Mammary epithelial cell (primary cell): ENCODE measurements at regions of chr6 and their contacts with region 1.

Region 1: DNA sequence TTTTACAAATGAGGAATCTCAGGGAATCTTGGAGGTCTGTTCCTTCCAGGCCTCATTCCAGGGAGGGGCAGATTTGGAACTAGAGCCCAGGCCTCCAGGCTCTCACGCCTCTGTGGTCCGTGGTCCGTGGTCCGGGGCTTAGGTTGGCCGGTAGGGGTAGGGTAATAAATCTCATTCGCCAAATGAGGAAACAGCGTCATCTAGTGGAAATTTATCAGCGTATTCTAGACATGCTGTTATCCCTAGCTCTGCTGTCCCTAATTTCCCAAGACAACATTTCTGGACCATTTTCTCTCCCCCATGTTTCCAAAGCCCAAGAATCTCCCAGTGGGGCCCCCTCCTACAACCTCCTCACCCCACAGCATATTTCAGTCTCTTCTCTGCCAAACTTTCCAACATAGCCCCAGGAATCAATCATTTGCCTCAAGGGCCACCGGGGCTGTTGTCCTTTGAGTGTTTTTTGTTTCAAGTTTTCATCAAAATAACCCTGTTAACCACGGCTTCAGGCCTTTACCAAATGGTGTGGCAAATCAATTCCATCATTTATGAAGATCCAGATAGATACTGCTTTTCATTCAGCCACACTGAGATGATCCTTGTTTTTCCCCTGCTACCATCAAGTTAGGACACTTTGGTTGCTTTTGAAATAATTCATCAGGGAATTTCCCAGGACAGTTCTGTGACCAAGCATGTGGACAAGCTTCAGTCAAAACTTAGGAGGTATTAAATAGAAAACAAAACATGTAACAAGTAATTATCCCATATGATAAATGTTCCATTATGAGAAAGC is 126.8 kb downstream of the ALDH8A1 start:
- DNase-seq: peak; percentile 72
- H3K4me3 ChIP-seq: no peak overlapping the region
- H3K27ac ChIP-seq: no peak overlapping the region
- H3K4me1 ChIP-seq: peaks cover 7% of the 10 kb centered on the region
- H3K27me3 ChIP-seq: no peaks in the 10 kb centered on the region
- CTCF ChIP-seq: peak; percentile 94 to 95

Region 2: GRCh38 chr6:134123666-134124208 is 699.4 kb before region 1 on chr6:
- CTCF ChIA-PET with region 1: interaction called, 7 read pairs
- dilution Hi-C with region 1: loop called (anchors 5 kb)
- in situ Hi-C with region 1: no loop called
- intact Hi-C with region 1: loop called (anchors 1 kb)
- DNase-seq: peak; percentile 80
- H3K4me3 ChIP-seq: no peak overlapping the region
- H3K27ac ChIP-seq: no peak overlapping the region
- H3K4me1 ChIP-seq: peaks cover 11% of the 10 kb centered on the region
- H3K27me3 ChIP-seq: no peaks in the 10 kb centered on the region
- CTCF ChIP-seq: peak; percentile 60 to 82

Region 3: DNA sequence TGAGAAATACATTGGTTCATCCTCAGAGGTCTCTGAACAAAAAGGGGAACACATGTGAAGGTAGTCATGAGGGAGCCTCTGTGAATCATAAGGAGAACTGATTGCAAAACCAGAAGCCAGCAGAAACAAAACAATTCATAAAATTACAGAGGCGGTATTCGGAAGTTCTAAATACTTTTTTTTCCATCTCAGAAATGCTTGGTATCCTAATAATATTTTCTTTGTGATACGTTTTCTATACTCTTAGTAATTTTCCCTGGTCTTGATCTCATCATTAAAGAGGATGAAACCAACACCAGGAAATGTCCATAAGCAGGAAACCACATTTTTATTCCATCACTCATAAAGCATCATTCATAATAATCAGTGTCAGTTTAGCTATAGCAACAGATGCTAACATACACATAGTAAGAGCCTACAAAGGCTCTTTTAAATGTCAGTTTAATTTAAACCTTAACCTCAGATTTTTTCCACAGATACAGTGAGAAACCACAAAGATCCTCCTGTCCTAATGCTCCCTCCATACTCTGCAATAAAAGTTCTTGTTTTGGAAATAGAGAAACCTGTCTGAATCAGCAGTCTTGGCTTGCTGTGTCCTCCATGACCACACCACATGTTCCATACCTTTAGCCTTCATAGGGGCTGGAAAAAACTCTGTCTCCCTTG is 534.4 kb before region 1 on chr6:
- CTCF ChIA-PET with region 1: no interaction called
- dilution Hi-C with region 1: no loop called
- in situ Hi-C with region 1: no loop called
- intact Hi-C with region 1: loop called (anchors 5 kb)
- DNase-seq: peak; percentile 97
- H3K4me3 ChIP-seq: peak overlapping the region in 1 of 3 experiments; percentile 4
- H3K27ac ChIP-seq: peak overlapping the region; percentile 100
- H3K4me1 ChIP-seq: peaks cover 19% of the 10 kb centered on the region
- H3K27me3 ChIP-seq: no peaks in the 10 kb centered on the region
- CTCF ChIP-seq: no peak

Region 4: GRCh38 chr6:134537146-134537555 is 286.0 kb before region 1 on chr6:
- CTCF ChIA-PET with region 1: no interaction called
- dilution Hi-C with region 1: loop called (anchors 5 kb)
- in situ Hi-C with region 1: no loop called
- intact Hi-C with region 1: loop called (anchors 1 kb)
- DNase-seq: peak; percentile 100
- H3K4me3 ChIP-seq: no peak overlapping the region
- H3K27ac ChIP-seq: peak overlapping the region; percentile 83
- H3K4me1 ChIP-seq: peaks cover 57% of the 10 kb centered on the region
- H3K27me3 ChIP-seq: no peaks in the 10 kb centered on the region
- CTCF ChIP-seq: no peak

Region 5: GRCh38 chr6:134882426-134883038 is 59.4 kb after region 1 on chr6:
- CTCF ChIA-PET with region 1: interaction called, 5 read pairs
- dilution Hi-C with region 1: no loop called
- in situ Hi-C with region 1: no loop called
- intact Hi-C with region 1: loop called (anchors 1 kb)
- DNase-seq: peak; percentile 67
- H3K4me3 ChIP-seq: no peak overlapping the region
- H3K27ac ChIP-seq: no peak overlapping the region
- H3K4me1 ChIP-seq: no peaks in the 10 kb centered on the region
- H3K27me3 ChIP-seq: no peaks in the 10 kb centered on the region
- CTCF ChIP-seq: peak; percentile 98

Region 6: GRCh38 chr6:135002229-135002844 is 179.2 kb after region 1 on chr6:
- CTCF ChIA-PET with region 1: no interaction called
- dilution Hi-C with region 1: no loop called
- in situ Hi-C with region 1: no loop called
- intact Hi-C with region 1: loop called (anchors 1 kb)
- DNase-seq: no peak
- H3K4me3 ChIP-seq: no peak overlapping the region
- H3K27ac ChIP-seq: no peak overlapping the region
- H3K4me1 ChIP-seq: no peaks in the 10 kb centered on the region
- H3K27me3 ChIP-seq: no peaks in the 10 kb centered on the region
- CTCF ChIP-seq: peak; percentile 65 to 74

Region 7: GRCh38 chr6:136396908-136397307 is 1573.8 kb after region 1 on chr6:
- CTCF ChIA-PET with region 1: no interaction called
- dilution Hi-C with region 1: no loop called
- in situ Hi-C with region 1: no loop called
- intact Hi-C with region 1: no loop called
- DNase-seq: no peak
- H3K4me3 ChIP-seq: no peak overlapping the region
- H3K27ac ChIP-seq: no peak overlapping the region
- H3K4me1 ChIP-seq: peaks cover 2% of the 10 kb centered on the region
- H3K27me3 ChIP-seq: no peaks in the 10 kb centered on the region
- CTCF ChIP-seq: no peak